Cardiac septum (tissue), 1 donor: ENCODE measurements at regions of chr5 and their contacts with region 1.

Region 1: GRCh38 chr5:113204525-113205161 is 228.0 kb downstream of the DCP2 start:
- DNase-seq: no peak

Region 2: DNA sequence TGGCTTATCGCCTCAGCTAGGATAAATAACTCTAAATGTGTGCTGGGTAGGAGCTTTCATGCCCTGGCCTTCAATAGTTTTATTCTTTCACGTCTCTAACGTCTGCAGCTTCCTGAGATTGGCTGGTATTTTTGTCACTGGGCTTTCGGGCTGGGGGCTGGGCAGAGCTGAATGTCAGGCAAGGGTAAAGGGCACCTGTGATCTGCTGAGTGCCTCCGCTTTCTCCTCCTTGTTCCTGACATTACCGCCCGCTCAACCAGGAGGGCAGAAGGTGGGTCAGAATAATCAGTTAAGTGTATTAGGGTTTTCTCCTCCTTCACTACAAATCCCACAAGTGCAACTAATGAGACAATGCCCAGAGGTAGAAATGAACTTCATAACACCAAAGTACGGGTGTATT is 13.6 kb after region 1 on chr5:
- intact Hi-C with region 1: loop called (anchors 1 kb)
- DNase-seq: no peak